H1 (cell line): ENCODE measurements at regions of chr10 and their contacts with region 1.

Region 1: DNA sequence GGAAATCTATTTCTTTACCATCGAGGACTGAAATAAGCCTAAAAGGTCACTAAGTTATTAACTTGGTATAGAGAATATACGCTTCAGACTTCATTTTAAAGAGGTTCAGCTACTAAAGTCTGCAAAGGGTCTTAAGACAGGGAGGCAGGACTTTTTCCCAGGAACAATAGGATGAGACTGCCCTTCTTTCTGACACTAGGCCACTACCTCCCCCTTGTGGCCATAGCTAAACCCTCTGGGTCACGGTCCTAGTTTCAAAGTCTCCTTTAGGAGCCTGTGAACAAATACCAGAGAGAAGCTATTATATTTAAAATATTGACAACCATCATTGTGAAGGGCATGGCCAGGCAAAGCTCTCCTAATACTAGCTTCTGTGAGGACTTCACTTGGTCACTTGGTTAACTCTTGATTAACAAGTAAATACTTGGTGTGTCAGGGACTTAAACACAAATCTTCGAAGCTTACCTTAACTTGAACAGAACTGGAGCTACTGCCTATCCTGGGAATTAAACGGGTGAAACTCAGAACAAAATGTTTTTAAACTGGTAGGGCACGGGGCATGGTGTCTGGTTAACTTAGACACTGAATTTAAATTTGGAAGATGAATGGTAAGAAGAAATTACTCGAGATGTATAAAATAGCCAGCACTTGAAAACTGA is 75.6 kb downstream of the CCDC6 start:
- DNase-seq: peak; percentile 29 to 70
- H3K4me3 ChIP-seq: no peak overlapping the region
- H3K27ac ChIP-seq: no peak overlapping the region
- H3K4me1 ChIP-seq: peaks cover 0 to 8% (median 3%) of the 10 kb centered on the region in 4 experiments; a peak in 3 of 7 replicates
- H3K27me3 ChIP-seq: no peaks in the 10 kb centered on the region
- CTCF ChIP-seq: peak; percentile 67 to 84 (median 78)
- EP300 ChIP-seq: no peak
- POLR2A ChIP-seq: no peak
- RAD21 ChIP-seq: peak; percentile 83

Region 2: GRCh38 chr10:59817773-59818172 is 13.0 kb before region 1 on chr10:
- CTCF ChIA-PET with region 1: interaction called, 40 read pairs
- POLR2A ChIA-PET with region 1: interaction called, 3 read pairs
- DNase-seq: no peak
- H3K4me3 ChIP-seq: no peak overlapping the region
- H3K27ac ChIP-seq: no peak overlapping the region
- H3K4me1 ChIP-seq: peaks cover 0 to 2% (median 0%) of the 10 kb centered on the region in 4 experiments; a peak in 2 of 7 replicates
- H3K27me3 ChIP-seq: no peaks in the 10 kb centered on the region
- CTCF ChIP-seq: no peak
- EP300 ChIP-seq: no peak
- POLR2A ChIP-seq: no peak
- RAD21 ChIP-seq: no peak

Region 3: DNA sequence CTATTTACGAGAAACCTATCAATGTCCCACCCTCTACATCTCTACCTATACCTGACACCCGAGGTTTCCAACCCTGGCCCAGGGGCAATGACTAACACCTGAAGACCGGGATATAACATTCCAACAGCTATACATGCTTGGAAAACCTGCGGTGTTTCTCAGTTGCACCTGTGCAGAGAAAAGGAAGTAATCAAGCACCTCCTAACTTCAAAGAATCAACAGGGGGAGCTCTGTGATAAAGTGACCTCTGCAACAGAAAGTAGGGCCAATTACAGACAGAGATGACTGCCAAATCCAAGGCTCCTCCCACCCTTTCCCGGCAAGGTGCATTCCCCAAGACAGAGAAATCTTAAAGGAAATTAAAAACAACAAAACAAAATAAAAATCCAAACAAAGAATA is 34.4 kb after region 1 on chr10:
- CTCF ChIA-PET with region 1: interaction called, 12 read pairs
- POLR2A ChIA-PET with region 1: no interaction called
- DNase-seq: peak in 1 of 2 experiments; percentile 19
- H3K4me3 ChIP-seq: no peak overlapping the region
- H3K27ac ChIP-seq: no peak overlapping the region
- H3K4me1 ChIP-seq: peaks cover 0 to 13% (median 10%) of the 10 kb centered on the region in 4 experiments; a peak in 5 of 7 replicates
- H3K27me3 ChIP-seq: no peaks in the 10 kb centered on the region
- CTCF ChIP-seq: peak in 2 of 3 experiments; percentile 42 to 53; a peak in 3 of 4 replicates
- EP300 ChIP-seq: no peak; a peak in 1 of 3 replicates
- POLR2A ChIP-seq: no peak
- RAD21 ChIP-seq: peak; percentile 75 to 80

Region 4: DNA sequence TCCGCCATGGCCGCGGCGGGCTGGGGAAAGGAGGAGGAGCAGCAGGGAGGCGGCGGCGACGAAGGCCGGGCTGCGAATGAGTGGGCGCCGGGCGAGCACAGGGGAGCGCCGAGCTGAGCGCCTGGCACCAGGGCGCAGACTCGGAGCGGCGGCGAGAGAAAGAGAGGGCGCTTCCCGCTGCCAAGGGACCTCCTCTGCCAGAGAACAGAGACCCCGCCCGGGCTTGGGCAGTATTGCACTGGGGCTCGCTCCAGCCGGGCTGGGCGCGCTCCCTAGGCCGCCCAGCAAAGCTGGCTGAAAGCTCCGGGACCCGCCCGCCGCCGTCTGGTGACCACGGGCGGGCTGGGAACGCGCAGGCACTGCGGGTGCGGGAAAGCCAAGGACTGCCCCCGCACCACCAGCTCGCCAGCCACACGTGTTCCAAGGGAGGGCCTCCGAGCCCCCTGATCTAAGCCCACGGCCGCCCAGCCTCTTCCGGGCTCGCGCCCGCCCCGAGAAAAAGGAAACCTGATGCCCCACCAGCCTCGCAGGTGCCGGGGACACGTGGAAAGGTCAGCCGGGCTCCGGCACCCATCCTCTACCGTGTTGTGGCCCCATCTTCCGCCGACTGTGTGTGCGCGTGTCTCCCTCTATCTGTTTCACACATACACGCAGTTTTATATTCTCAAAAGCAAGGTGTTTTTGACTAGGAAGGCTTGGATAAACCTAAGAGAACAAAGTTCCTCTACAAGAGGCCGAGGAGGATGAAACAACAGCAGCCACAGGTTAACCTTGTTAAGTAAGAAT is 75.9 kb after region 1 on chr10 and contains the start of gene CCDC6:
- CTCF ChIA-PET with region 1: interaction called, 15 read pairs
- POLR2A ChIA-PET with region 1: interaction called, 5 read pairs
- DNase-seq: peak; percentile 51 to 94
- H3K4me3 ChIP-seq: peak within 1 kb of the TSS; percentile 81 to 98 (median 95)
- H3K27ac ChIP-seq: peak within 1 kb of the TSS; percentile 90
- H3K4me1 ChIP-seq: peaks cover 2 to 16% (median 10%) of the 10 kb centered on the region in 4 experiments; a peak in 6 of 7 replicates
- H3K27me3 ChIP-seq: no peaks in the 10 kb centered on the region
- CTCF ChIP-seq: peak; percentile 70 to 77 (median 70)
- EP300 ChIP-seq: no peak
- POLR2A ChIP-seq: peak; percentile 71 to 80
- RAD21 ChIP-seq: peak; percentile 63 to 66
- total RNA-seq, gene CCDC6: 74.4 and 74.8 TPM in 2 replicates